Left cardiac atrium (tissue), 4 donors: ENCODE measurements at regions of chr10 and their contacts with region 1.

Region 1: GRCh38 chr10:75417522-75417927 is 13.9 kb upstream of the LRMDA start:
- DNase-seq: no peak
- ATAC-seq: no peak

Region 2: GRCh38 chr10:75035975-75036708 is 381.4 kb before region 1 on chr10:
- intact Hi-C with region 1: no loop called
- DNase-seq: no peak
- ATAC-seq: peak in 1 of 2 donors; percentile 3

Region 3: GRCh38 chr10:75375838-75376237 is 41.7 kb before region 1 on chr10:
- intact Hi-C with region 1: no loop called
- DNase-seq: no peak
- ATAC-seq: peak; percentile 51 to 68

Region 4: GRCh38 chr10:75682649-75683557 is 265.4 kb after region 1 on chr10:
- intact Hi-C with region 1: no loop called
- DNase-seq: peak; percentile 22
- ATAC-seq: peak; percentile 31 to 41

Region 5: DNA sequence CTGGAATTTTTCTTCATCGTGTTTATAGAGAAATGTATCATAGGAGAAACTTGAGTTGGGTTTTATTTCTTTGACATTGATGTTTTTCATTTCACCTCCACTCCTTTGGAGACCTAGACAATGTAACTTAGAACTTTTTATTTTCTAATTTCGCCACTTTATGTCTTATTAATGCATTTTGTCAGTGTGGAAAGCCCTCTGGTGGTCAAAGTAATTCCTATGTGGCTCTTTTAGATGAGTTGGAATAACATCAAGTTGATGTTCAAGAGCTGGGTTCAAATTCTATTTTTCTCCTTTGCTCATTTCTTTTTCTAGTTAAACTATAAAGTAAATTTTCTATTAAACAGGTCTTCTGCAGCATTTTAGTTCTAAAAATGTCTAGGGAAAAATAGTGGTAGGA is 492.5 kb after region 1 on chr10:
- intact Hi-C with region 1: loop called in 1 of 2 experiments (anchors 10 kb)
- DNase-seq: no peak
- ATAC-seq: no peak